H1 (cell line): ENCODE measurements at regions of chr17 and their contacts with region 1.

Region 1: DNA sequence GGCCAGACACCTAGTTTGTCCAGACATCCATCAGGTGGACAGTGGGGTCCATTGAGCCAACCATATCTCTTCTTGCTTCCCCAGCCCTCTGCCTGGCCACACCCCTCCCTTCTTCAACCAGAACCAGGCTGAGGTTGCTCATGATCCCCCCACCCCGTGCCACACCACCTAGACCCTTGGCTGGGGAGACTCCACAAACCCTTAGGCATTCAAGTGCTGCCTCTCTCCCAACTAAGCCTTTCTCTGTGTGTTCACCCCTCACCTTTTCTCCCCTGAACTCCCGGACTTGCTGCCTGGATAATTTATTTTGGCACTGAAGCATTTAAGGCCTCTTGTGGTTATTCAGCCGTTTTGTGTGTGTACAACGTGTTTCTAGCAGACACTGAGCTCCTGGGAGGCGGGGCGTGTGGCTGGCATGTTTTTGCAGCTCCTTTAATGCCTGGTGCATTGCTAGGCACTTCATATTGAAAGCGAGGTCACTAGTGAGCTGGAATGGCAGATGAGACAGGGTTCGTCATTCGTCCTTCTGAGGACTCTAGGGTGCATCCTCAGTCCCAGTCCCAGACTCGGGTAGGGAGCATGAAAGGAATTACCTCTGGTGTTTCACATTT is 28.7 kb downstream of the CACNA1G start:
- DNase-seq: no peak
- H3K4me3 ChIP-seq: no peak overlapping the region
- H3K27ac ChIP-seq: no peak overlapping the region
- H3K4me1 ChIP-seq: peaks cover 0 to 20% (median 11%) of the 10 kb centered on the region in 4 experiments; a peak in 6 of 7 replicates
- H3K27me3 ChIP-seq: no peaks in the 10 kb centered on the region; a peak in 1 of 7 replicates
- CTCF ChIP-seq: no peak
- EP300 ChIP-seq: no peak
- POLR2A ChIP-seq: no peak
- RAD21 ChIP-seq: no peak

Region 2: DNA sequence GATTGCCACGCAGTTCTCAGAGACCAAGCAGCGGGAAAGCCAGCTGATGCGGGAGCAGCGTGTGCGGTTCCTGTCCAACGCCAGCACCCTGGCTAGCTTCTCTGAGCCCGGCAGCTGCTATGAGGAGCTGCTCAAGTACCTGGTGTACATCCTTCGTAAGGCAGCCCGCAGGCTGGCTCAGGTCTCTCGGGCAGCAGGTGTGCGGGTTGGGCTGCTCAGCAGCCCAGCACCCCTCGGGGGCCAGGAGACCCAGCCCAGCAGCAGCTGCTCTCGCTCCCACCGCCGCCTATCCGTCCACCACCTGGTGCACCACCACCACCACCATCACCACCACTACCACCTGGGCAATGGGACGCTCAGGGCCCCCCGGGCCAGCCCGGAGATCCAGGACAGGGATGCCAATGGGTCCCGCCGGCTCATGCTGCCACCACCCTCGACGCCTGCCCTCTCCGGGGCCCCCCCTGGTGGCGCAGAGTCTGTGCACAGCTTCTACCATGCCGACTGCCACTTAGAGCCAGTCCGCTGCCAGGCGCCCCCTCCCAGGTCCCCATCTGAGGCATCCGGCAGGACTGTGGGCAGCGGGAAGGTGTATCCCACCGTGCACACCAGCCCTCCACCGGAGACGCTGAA is 13.5 kb before region 1 on chr17:
- CTCF ChIA-PET with region 1: interaction called, 14 read pairs
- POLR2A ChIA-PET with region 1: interaction called, 4 read pairs
- DNase-seq: peak in 1 of 2 experiments; percentile 73
- H3K4me3 ChIP-seq: no peak overlapping the region
- H3K27ac ChIP-seq: no peak overlapping the region
- H3K4me1 ChIP-seq: peaks cover 0 to 8% (median 5%) of the 10 kb centered on the region in 4 experiments; a peak in 4 of 7 replicates
- H3K27me3 ChIP-seq: no peaks in the 10 kb centered on the region
- CTCF ChIP-seq: peak; percentile 29 to 36 (median 36); a peak in 3 of 4 replicates
- EP300 ChIP-seq: no peak
- POLR2A ChIP-seq: no peak
- RAD21 ChIP-seq: peak in 1 of 2 experiments; percentile 31; a peak in 3 of 4 replicates